Left lung (tissue), 14 donors: ENCODE measurements at regions of chr4 and their contacts with region 1.

Region 1: GRCh38 chr4:169024762-169025161 is 14.7 kb upstream of the CBR4 start:
- DNase-seq: peak in 1 of 4 donors; percentile 59
- ATAC-seq: peak; percentile 86
- H3K4me3 ChIP-seq: no peak overlapping the region
- H3K27ac ChIP-seq: no peak overlapping the region
- H3K4me1 ChIP-seq: no peaks in the 10 kb centered on the region
- H3K27me3 ChIP-seq: no peaks in the 10 kb centered on the region
- CTCF ChIP-seq: peak; percentile 33

Region 2: GRCh38 chr4:169485791-169486742 is 461.3 kb after region 1 on chr4:
- intact Hi-C with region 1: loop called in 1 of 2 experiments (anchors 5 kb)
- DNase-seq: peak in 2 of 4 donors; percentile 59 to 65
- ATAC-seq: peak; percentile 75
- H3K4me3 ChIP-seq: no peak overlapping the region
- H3K27ac ChIP-seq: no peak overlapping the region
- H3K4me1 ChIP-seq: peaks cover 0 to 4% of the 10 kb centered on the region in 2 donors
- H3K27me3 ChIP-seq: no peaks in the 10 kb centered on the region
- CTCF ChIP-seq: peak; percentile 15 to 29